Calu3 (cell line): ENCODE measurements at regions of chr17 and their contacts with region 1.

Region 1: DNA sequence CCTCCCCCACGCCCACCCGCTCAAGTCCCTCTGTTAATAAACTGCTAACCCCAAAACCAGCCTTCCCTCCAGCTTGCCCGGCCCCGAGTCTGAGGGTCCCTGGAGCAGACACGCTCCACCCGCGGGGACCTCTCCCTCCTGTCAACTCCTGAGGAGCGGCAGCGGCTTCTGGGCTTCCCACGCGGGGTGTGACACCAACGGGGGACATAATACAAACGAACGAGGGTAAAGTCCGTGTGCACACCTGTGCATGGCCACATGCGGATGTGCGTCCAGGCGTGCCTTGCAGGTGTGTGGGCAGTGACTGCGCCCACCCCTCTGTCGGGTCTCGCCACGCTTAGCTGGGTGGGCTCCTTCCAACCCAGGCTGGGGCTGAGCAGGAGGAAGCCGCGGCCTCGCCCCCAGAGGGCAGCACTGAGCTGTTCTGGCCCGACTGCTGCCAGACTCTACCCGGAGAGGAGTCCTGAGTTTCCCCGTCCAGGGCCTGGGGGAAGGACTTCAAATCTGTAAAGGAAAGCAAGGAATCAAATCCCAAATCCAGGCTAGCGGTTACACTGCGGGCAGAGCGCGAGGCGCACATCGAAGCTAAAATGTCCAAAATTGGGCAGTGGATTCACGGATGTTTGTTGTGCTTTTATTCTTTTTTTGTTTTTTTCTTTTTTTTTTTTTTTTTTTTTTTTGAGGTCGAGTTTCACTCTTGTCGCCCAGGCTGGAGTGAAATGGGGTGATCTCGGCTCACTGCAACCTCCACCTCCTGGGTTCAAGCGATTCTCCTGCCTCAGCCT is 24.2 kb upstream of the KRT17 start:
- DNase-seq: peak; percentile 98
- H3K4me3 Mint-ChIP-seq: peak overlapping the region; percentile 64
- H3K27ac Mint-ChIP-seq: peak overlapping the region; percentile 62
- H3K4me1 Mint-ChIP-seq: peaks cover 33% of the 10 kb centered on the region
- H3K27me3 Mint-ChIP-seq: no peaks in the 10 kb centered on the region
- CTCF ChIP-seq: peak; percentile 93

Region 2: DNA sequence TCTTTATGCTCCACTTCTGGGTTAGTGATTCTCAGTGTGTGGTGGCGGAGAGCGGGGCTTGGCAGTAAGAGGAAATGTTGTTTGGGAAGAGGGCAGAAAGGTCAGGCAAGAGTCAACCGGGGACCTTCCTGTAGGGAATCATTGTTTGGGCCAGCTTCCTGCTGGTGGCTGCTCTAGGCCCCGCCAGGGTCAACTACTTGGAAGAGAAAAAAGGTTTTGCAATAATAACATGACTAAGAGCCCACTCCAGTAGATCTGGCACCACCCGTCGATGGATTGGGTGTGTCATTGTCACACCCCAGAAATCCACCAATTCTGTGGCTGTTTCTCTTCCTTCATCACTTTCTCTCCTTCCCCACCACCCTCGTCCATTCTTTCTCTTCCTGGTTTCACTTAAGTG is 940.9 kb before region 1 on chr17:
- CTCF ChIA-PET with region 1: interaction called, 11 read pairs
- intact Hi-C with region 1: no loop called
- DNase-seq: peak; percentile 92
- H3K4me3 Mint-ChIP-seq: no peak overlapping the region
- H3K27ac Mint-ChIP-seq: peak overlapping the region; percentile 14
- H3K4me1 Mint-ChIP-seq: peaks cover 36% of the 10 kb centered on the region
- H3K27me3 Mint-ChIP-seq: peaks cover 14% of the 10 kb centered on the region
- CTCF ChIP-seq: no peak

Region 3: DNA sequence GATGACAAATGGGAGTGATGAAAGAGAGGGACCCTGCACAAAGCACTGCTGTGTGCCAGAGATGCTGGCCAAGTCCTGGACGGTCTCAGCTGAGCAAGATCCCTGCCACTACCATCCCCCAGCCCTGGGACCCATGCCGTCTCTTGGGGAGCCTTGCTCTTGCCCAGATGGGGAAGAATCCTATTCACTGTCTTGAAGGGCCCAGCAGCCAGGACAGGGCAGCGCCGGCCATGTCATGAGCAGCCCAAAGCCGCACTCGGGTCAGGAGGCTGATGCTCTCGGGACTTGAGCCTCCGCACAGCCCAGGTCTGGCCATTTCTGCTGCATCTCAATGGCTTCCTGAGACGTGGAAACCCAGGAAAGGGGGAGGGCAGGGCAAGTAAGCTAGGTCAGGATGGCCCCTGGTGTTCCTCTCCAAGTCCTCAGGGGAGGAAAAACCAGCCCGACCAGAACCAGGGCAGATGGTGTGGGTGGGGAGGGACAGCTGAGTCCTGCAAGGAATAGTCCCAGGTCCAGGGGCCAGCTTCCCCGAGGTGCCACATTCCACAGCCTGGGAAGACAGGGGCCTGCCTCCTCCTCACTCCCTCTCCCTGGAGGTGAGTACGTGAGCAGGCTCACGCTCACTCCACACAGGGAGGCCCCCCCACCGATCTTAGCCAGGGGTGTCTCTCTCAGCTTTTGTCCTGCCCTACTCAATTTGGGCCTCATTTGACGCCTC is 112.7 kb before region 1 on chr17:
- CTCF ChIA-PET with region 1: no interaction called
- intact Hi-C with region 1: no loop called
- DNase-seq: peak; percentile 74
- H3K4me3 Mint-ChIP-seq: no peak overlapping the region
- H3K27ac Mint-ChIP-seq: peak overlapping the region; percentile 50
- H3K4me1 Mint-ChIP-seq: peaks cover 88% of the 10 kb centered on the region
- H3K27me3 Mint-ChIP-seq: no peaks in the 10 kb centered on the region
- CTCF ChIP-seq: no peak

Region 4: DNA sequence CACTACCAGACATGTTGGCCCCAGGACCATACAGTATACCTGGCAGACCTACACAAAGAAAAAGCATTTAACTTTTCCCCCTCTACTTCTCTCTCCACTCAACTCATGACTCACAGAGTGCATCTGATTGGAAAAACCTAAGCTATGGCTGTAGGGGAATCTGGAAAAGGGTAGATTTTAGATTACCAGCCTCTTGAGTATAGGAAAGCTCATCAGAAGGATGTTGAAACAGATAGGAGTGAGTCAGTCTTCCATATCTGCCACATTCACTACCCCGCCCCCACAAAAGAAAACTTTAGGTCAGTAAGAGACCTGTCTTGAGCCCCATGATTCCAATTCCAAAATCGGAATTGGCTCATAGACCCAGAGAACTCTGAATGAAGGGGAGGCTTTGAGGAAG is 89.1 kb before region 1 on chr17:
- CTCF ChIA-PET with region 1: interaction called, 10 read pairs
- intact Hi-C with region 1: no loop called
- DNase-seq: no peak
- H3K4me3 Mint-ChIP-seq: no peak overlapping the region
- H3K27ac Mint-ChIP-seq: no peak overlapping the region
- H3K4me1 Mint-ChIP-seq: peaks cover 11% of the 10 kb centered on the region
- H3K27me3 Mint-ChIP-seq: peaks cover 14% of the 10 kb centered on the region
- CTCF ChIP-seq: no peak

Region 5: DNA sequence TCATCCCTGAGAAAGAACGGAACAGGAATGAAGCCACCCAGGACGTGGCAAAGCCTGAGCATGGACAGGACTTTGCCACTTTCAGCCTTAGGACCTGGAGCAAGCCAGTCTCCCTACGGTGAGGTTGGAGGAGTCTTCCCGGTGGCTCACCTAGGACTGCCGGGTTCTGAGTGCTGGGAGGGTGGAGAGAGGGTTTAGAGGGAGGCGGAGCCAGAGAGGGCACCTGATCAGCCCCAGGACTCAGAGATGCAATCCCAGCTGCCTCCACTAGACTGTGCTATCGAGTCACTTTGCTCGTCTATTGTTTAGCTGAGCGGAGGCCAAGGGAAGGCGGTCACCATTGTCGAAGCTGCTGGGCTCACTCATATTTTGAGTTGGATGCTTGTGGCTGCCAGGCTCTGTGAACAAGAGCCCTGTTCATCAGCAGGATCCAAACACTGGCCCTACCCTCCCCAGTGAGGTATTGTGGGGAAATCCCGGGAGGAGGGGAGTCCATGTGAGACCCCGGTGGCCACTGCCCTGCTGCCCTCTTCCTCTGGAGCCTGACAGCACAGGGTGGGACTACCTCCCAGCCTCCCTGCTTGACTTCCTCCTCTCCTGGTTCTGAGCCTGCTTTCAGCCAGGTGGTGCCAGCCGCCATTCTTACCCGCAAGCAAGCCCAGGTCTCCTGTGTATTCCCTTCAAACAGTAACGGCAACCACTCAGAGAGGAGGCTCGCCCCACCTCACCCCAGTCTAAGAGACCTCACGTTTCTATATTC is 68.9 kb before region 1 on chr17:
- CTCF ChIA-PET with region 1: interaction called, 19 read pairs
- intact Hi-C with region 1: loop called (anchors 5 kb)
- DNase-seq: peak; percentile 96
- H3K4me3 Mint-ChIP-seq: no peak overlapping the region
- H3K27ac Mint-ChIP-seq: no peak overlapping the region
- H3K4me1 Mint-ChIP-seq: peaks cover 47% of the 10 kb centered on the region
- H3K27me3 Mint-ChIP-seq: no peaks in the 10 kb centered on the region
- CTCF ChIP-seq: peak; percentile 93

Region 6: GRCh38 chr17:41624208-41625101 is 24.1 kb before region 1 on chr17 and contains the start of gene KRT17:
- CTCF ChIA-PET with region 1: interaction called, 14 read pairs
- intact Hi-C with region 1: no loop called
- DNase-seq: peak; percentile 96
- H3K4me3 Mint-ChIP-seq: peak within 1 kb of the TSS; percentile 66
- H3K27ac Mint-ChIP-seq: peak within 1 kb of the TSS; percentile 85
- H3K4me1 Mint-ChIP-seq: peaks cover 56% of the 10 kb centered on the region
- H3K27me3 Mint-ChIP-seq: no peaks in the 10 kb centered on the region
- CTCF ChIP-seq: peak; percentile 57
- total RNA-seq, gene KRT17: 472 and 593 TPM in 2 replicates

Region 7: DNA sequence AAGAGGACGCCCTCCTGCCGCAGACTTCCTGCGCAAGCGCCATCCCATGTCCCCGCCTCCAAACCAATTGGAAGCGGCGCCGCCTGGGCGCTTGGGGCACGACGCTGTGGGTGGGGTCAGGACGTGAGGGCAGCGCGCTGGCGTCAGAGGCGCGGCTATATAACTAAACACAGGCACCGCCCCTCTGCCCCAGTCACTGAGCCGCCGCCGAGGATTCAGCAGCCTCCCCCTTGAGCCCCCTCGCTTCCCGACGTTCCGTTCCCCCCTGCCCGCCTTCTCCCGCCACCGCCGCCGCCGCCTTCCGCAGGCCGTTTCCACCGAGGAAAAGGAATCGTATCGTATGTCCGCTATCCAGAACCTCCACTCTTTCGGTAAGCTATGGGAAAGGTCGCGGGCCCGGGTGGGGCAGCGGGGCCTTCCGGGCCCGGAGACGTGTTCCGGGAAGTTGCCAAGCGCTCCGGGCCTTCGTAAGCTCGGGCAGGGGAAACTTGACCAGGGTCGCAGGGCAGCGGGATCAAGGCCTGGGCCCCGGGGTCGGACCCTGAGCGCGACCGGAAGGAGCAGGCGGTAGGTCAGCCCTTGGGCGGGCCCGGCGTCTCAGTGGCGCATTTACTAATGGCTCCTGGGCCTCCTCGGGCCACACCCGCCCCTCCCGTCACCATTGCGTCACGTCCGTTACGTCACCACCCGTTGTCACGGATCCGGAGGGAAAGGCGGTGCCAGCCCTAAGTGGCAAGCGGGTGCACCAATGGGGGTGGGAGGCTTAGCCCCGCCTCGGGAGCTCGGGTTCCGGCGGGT is 40.3 kb after region 1 on chr17 and contains the start of gene EIF1:
- CTCF ChIA-PET with region 1: interaction called, 15 read pairs
- intact Hi-C with region 1: no loop called
- DNase-seq: peak; percentile 100
- H3K4me3 Mint-ChIP-seq: peak within 1 kb of the TSS; percentile 86
- H3K27ac Mint-ChIP-seq: peak within 1 kb of the TSS; percentile 99
- H3K4me1 Mint-ChIP-seq: peaks cover 36% of the 10 kb centered on the region
- H3K27me3 Mint-ChIP-seq: no peaks in the 10 kb centered on the region
- CTCF ChIP-seq: no peak
- total RNA-seq, gene EIF1: 807 and 937 TPM in 2 replicates

Region 8: GRCh38 chr17:41738077-41738735 is 89.6 kb after region 1 on chr17:
- CTCF ChIA-PET with region 1: no interaction called
- intact Hi-C with region 1: no loop called
- DNase-seq: peak; percentile 91
- H3K4me3 Mint-ChIP-seq: no peak overlapping the region
- H3K27ac Mint-ChIP-seq: no peak overlapping the region
- H3K4me1 Mint-ChIP-seq: peaks cover 19% of the 10 kb centered on the region
- H3K27me3 Mint-ChIP-seq: peaks cover 48% of the 10 kb centered on the region
- CTCF ChIP-seq: peak; percentile 100